Ascending aorta (tissue), 2 donors: ENCODE measurements at regions of chr3 and their contacts with region 1.

Region 1: DNA sequence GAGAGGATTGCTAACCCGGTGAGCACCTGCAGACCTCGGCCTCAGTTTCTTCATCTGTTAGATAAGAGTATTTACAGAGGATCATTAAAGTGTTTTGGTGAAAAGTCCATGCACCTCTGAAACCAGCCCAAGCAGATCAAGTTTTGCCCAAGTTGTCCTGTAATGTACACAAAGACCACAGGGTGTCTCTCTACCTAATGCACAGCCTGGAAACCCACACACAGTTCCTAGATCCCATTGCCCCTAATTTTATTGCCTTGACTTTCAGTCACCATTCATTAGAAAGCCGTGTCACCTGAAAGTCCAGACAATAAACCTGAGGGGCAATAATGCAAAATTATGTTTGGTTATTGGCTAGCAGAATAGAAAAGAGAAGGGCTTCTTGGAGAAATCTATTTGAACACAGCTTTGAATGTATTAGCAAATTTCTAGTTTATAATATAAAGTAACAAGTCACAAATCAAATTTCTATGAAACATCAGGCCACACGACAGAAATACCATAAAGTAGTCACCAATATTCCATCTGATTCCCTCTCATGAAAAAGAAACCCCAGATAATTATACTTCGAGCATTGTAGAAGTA is 161.3 kb upstream of the SLC2A2 start:
- DNase-seq: no peak
- H3K4me3 ChIP-seq: no peak overlapping the region
- H3K27ac ChIP-seq: no peak overlapping the region
- H3K4me1 ChIP-seq: peaks cover 0 to 9% of the 10 kb centered on the region in 2 donors
- H3K27me3 ChIP-seq: no peaks in the 10 kb centered on the region
- CTCF ChIP-seq: peak; percentile 22 to 53 (median 47)

Region 2: GRCh38 chr3:171459942-171460724 is 272.3 kb after region 1 on chr3 and contains the start of gene TNIK:
- intact Hi-C with region 1: loop called (anchors 5 kb)
- DNase-seq: peak; percentile 80 to 94
- H3K4me3 ChIP-seq: peak within 1 kb of the TSS; percentile 73 to 93
- H3K27ac ChIP-seq: peak within 1 kb of the TSS; percentile 54 to 66
- H3K4me1 ChIP-seq: peaks cover 0 to 4% of the 10 kb centered on the region in 2 donors
- H3K27me3 ChIP-seq: no peaks in the 10 kb centered on the region
- CTCF ChIP-seq: peak in 1 of 3 experiments; percentile 3
- total RNA-seq, gene TNIK: 0.75 TPM

Region 3: GRCh38 chr3:171470714-171471227 is 283.0 kb after region 1 on chr3:
- intact Hi-C with region 1: no loop called
- DNase-seq: no peak
- H3K4me3 ChIP-seq: no peak overlapping the region
- H3K27ac ChIP-seq: no peak overlapping the region
- H3K4me1 ChIP-seq: peaks cover 0 to 3% of the 10 kb centered on the region in 2 donors
- H3K27me3 ChIP-seq: no peaks in the 10 kb centered on the region
- CTCF ChIP-seq: no peak